WTC11 (cell line): ENCODE measurements at regions of chr14 and their contacts with region 1.

Region 1: DNA sequence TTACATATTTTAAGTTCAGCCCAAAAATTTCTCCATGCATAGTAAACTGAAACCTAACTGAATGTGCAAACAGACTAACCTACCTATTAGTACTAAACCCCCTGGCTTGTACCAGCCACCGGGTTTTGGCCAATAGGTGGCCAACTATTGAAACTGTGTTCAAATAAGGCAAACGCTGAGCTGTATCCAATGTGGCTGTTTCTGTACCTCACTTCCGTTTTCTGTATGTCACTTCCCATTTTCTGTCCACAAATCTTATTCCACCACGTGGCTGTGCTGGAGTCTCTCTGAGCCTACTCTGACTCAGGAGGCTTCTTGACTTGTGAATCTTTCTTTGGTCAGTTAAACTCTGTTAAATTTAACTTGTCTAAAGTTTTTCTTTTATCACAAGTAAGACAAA is 6.0 kb upstream of the FBXO34 start:
- DNase-seq: no peak
- ATAC-seq: no peak
- H3K4me3 Mint-ChIP-seq: no peak overlapping the region
- H3K27ac Mint-ChIP-seq: no peak overlapping the region
- H3K4me1 Mint-ChIP-seq: peaks cover 6% of the 10 kb centered on the region
- H3K27me3 Mint-ChIP-seq: no peaks in the 10 kb centered on the region
- CTCF ChIP-seq: no peak

Region 2: GRCh38 chr14:55348766-55349453 is 83.7 kb after region 1 on chr14:
- CTCF ChIA-PET with region 1: interaction called, 48 read pairs
- POLR2A ChIA-PET with region 1: interaction called, 10 read pairs
- DNase-seq: no peak
- ATAC-seq: no peak
- H3K4me3 Mint-ChIP-seq: no peak overlapping the region
- H3K27ac Mint-ChIP-seq: no peak overlapping the region
- H3K4me1 Mint-ChIP-seq: peaks cover 16% of the 10 kb centered on the region
- H3K27me3 Mint-ChIP-seq: no peaks in the 10 kb centered on the region
- CTCF ChIP-seq: no peak